Endothelial cell of umbilical vein (primary cell): ENCODE measurements at regions of chr3 and their contacts with region 1.

Region 1: DNA sequence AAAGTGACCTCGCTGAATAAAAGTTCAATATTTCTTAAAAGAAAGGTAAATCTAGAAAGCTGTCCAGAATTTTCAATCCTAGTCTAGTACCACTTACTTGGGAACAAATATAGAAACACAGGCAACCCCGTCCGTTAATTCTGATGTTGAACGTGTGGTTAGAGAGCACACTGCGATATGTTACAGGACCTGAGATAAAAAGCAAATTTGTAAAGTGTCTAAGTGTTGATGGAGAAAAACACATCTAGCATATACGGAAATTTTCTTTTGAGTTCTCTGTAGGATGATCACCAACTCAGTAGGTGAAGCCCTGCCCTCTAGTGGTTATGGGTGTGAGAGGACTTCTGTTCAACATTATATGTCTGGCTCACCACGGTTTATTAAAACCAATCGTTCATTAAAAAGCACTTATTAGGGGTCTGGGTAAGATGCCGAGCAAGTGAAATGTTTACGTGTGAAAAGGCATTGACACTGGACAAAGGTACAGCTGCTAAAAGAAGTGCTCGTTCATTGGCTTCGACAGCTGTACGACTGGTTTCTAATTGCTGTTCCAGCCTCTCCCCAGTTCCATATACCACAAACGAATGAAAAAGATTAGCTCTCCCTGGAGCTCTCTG is 1.0 kb upstream of the ATP2C1 start:
- DNase-seq: peak; percentile 82
- H3K4me3 ChIP-seq: peak overlapping the region; percentile 61 to 87 (median 82)
- H3K27ac ChIP-seq: peak overlapping the region; percentile 76
- H3K4me1 ChIP-seq: peaks cover 14% of the 10 kb centered on the region
- H3K27me3 ChIP-seq: no peaks in the 10 kb centered on the region
- CTCF ChIP-seq: peak; percentile 71 to 74
- POLR2A ChIP-seq: peak; percentile 45

Region 2: GRCh38 chr3:130539005-130539404 is 353.9 kb before region 1 on chr3:
- CTCF ChIA-PET with region 1: interaction called, 3 read pairs
- POLR2A ChIA-PET with region 1: no interaction called
- dilution Hi-C with region 1: no loop called
- intact Hi-C with region 1: loop called (anchors 5 kb)
- DNase-seq: peak; percentile 50
- H3K4me3 ChIP-seq: no peak overlapping the region
- H3K27ac ChIP-seq: no peak overlapping the region
- H3K4me1 ChIP-seq: no peaks in the 10 kb centered on the region
- H3K27me3 ChIP-seq: peaks cover 0 to 1% of the 10 kb centered on the region in 2 experiments
- CTCF ChIP-seq: peak; percentile 62 to 76
- POLR2A ChIP-seq: no peak

Region 3: GRCh38 chr3:130699765-130700164 is 193.1 kb before region 1 on chr3:
- CTCF ChIA-PET with region 1: interaction called, 5 read pairs
- POLR2A ChIA-PET with region 1: no interaction called
- dilution Hi-C with region 1: no loop called
- intact Hi-C with region 1: loop called (anchors 1 kb)
- DNase-seq: peak; percentile 33
- H3K4me3 ChIP-seq: no peak overlapping the region
- H3K27ac ChIP-seq: peak overlapping the region; percentile 71
- H3K4me1 ChIP-seq: peaks cover 9% of the 10 kb centered on the region
- H3K27me3 ChIP-seq: no peaks in the 10 kb centered on the region
- CTCF ChIP-seq: peak in 1 of 2 donors; percentile 14
- POLR2A ChIP-seq: no peak

Region 4: DNA sequence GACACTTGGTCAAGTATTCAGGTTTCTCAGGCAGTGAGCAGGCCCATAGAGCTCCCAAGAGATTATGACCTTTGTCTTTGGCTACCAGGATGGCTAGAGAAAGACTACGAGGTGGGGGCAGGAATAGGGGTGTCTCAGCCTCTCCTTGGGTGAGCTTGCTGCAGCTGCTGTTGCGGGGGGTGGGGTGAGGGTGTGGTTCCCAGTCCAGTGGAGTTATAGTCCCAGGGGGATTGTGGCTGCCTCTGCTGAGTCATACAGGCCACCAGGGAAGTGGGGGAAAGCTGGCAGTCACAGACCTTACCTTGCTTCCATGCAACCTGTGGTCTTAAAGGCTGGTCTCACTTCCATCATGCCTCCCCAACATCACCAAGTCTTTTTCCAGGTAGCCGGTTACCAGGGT is 32.8 kb after region 1 on chr3:
- CTCF ChIA-PET with region 1: interaction called, 16 read pairs
- POLR2A ChIA-PET with region 1: interaction called, 6 read pairs
- dilution Hi-C with region 1: no loop called
- intact Hi-C with region 1: loop called (anchors 2 kb)
- DNase-seq: no peak
- H3K4me3 ChIP-seq: no peak overlapping the region
- H3K27ac ChIP-seq: no peak overlapping the region
- H3K4me1 ChIP-seq: peaks cover 10% of the 10 kb centered on the region
- H3K27me3 ChIP-seq: no peaks in the 10 kb centered on the region
- CTCF ChIP-seq: no peak
- POLR2A ChIP-seq: no peak

Region 5: DNA sequence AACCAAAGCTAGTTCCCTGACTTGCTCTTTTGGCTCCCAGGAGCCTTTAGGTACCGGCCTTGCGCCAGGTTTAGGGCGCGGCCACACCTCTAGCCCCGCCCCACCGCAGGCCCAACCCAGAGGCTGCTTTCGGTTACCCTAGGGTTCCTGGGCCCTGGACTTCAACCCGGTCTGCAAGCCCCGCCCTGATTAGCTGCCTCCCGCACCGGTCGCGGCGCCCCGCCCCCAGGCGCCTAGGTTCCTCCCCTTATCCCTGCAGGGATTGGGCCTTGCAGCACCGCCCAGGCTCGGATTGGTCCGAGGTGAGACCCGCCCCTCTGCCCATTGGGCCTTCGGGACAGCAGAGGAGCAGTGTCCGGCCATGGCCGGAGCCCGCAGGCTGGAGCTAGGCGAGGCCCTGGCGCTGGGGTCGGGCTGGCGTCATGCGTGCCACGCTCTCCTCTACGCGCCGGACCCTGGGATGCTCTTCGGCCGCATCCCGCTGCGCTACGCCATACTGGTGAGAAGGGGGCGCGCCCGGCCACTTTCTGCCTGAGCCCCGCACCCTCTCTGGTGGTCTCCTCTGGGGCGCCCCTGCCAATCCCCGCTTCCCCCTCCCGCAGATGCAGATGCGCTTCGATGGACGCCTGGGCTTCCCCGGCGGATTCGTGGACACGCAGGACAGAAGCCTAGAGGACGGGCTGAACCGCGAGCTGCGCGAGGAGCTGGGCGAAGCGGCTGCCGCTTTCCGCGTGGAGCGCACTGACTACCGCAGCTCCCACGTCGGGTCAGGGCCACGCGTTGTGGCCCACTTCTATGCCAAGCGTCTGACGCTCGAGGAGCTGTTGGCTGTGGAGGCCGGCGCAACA is 488.8 kb after region 1 on chr3 and contains the start of gene NUDT16:
- CTCF ChIA-PET with region 1: no interaction called
- POLR2A ChIA-PET with region 1: no interaction called
- dilution Hi-C with region 1: no loop called
- intact Hi-C with region 1: loop called (anchors 10 kb)
- DNase-seq: peak; percentile 99
- H3K4me3 ChIP-seq: peak within 1 kb of the TSS; percentile 76 to 85 (median 77)
- H3K27ac ChIP-seq: peak within 1 kb of the TSS; percentile 58
- H3K4me1 ChIP-seq: peaks cover 34% of the 10 kb centered on the region
- H3K27me3 ChIP-seq: no peaks in the 10 kb centered on the region
- CTCF ChIP-seq: no peak
- POLR2A ChIP-seq: peak; percentile 89
- total RNA-seq, gene NUDT16: 28.5 and 29.7 TPM in 2 replicates

Region 6: GRCh38 chr3:131518680-131519079 is 625.8 kb after region 1 on chr3:
- CTCF ChIA-PET with region 1: no interaction called
- POLR2A ChIA-PET with region 1: no interaction called
- dilution Hi-C with region 1: no loop called
- intact Hi-C with region 1: no loop called
- DNase-seq: no peak
- H3K4me3 ChIP-seq: no peak overlapping the region
- H3K27ac ChIP-seq: no peak overlapping the region
- H3K4me1 ChIP-seq: no peaks in the 10 kb centered on the region
- H3K27me3 ChIP-seq: no peaks in the 10 kb centered on the region
- CTCF ChIP-seq: no peak
- POLR2A ChIP-seq: no peak